Heart right ventricle (tissue), 16 donors: ENCODE measurements at regions of chr6 and their contacts with region 1.

Region 1: GRCh38 chr6:75493400-75494064 is at the start of gene FILIP1:
- DNase-seq: peak in 1 of 2 donors; percentile 86
- ATAC-seq: peak; percentile 87 to 96 (median 90)
- H3K4me3 ChIP-seq: peak within 1 kb of the TSS; percentile 38 to 71 (median 56)
- H3K27ac ChIP-seq: peak within 1 kb of the TSS; percentile 75 to 95 (median 90)
- H3K4me1 ChIP-seq: peaks cover 0 to 63% (median 49%) of the 10 kb centered on the region in 9 donors
- H3K27me3 ChIP-seq: no peaks in the 10 kb centered on the region
- CTCF ChIP-seq: no peak
- total RNA-seq, gene FILIP1: 112 to 269 (median 205) TPM

Region 2: DNA sequence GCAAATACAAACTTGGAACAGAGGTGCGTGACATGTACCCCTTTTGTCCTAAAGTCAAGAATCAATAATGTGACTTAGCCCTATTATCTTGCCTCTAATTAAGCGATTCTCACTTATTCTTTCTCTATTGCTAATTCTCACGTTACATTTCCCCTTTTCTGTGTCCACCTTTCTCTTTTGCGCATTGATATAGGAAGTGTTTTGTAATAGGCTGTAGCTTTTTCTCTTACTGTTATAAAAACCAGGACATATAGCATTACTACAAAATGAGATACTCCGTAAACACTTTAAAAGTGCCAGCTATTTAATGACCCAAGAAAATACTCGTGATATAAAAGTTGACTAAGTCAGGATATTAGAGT is 208.3 kb before region 1 on chr6:
- intact Hi-C with region 1: no loop called
- DNase-seq: no peak
- ATAC-seq: no peak
- H3K4me3 ChIP-seq: peak overlapping the region; percentile 26 to 96 (median 90)
- H3K27ac ChIP-seq: peak overlapping the region in 9 of 10 donors; percentile 74 to 95 (median 92)
- H3K4me1 ChIP-seq: peaks cover 0 to 57% (median 41%) of the 10 kb centered on the region in 9 donors
- H3K27me3 ChIP-seq: no peaks in the 10 kb centered on the region
- CTCF ChIP-seq: no peak

Region 3: GRCh38 chr6:75376347-75377024 is 117.0 kb before region 1 on chr6:
- intact Hi-C with region 1: loop called in 1 of 10 experiments (anchors 5 kb)
- DNase-seq: no peak
- ATAC-seq: peak in 1 of 8 donors; percentile 46
- H3K4me3 ChIP-seq: no peak overlapping the region
- H3K27ac ChIP-seq: no peak overlapping the region
- H3K4me1 ChIP-seq: peaks cover 0 to 36% (median 17%) of the 10 kb centered on the region in 9 donors
- H3K27me3 ChIP-seq: no peaks in the 10 kb centered on the region
- CTCF ChIP-seq: no peak

Region 4: DNA sequence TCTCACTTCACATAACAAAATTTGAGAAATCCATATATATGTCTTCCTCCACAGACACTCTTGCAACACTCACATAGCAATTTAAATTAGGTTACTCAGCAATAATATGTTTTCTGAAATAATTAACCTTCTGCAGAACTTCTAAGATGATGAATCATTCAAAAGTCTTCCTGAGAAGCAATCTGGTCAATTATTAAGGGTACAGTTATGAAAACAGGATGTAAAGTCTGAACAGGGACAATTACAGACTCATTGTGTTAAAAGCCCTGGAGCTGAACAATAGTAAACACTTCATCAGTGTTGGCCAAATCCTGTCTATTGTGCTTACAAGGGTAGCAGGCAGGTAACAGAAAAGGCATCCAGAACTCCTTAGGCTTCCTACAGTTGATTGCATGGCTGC is 75.3 kb before region 1 on chr6:
- intact Hi-C with region 1: loop called in 2 of 10 experiments (anchors 5 kb)
- DNase-seq: no peak
- ATAC-seq: peak in 7 of 8 donors; percentile 51 to 80 (median 70)
- H3K4me3 ChIP-seq: no peak overlapping the region
- H3K27ac ChIP-seq: peak overlapping the region in 6 of 10 donors; percentile 6 to 68 (median 43)
- H3K4me1 ChIP-seq: peaks cover 4 to 96% (median 74%) of the 10 kb centered on the region in 9 donors
- H3K27me3 ChIP-seq: no peaks in the 10 kb centered on the region
- CTCF ChIP-seq: no peak

Region 5: DNA sequence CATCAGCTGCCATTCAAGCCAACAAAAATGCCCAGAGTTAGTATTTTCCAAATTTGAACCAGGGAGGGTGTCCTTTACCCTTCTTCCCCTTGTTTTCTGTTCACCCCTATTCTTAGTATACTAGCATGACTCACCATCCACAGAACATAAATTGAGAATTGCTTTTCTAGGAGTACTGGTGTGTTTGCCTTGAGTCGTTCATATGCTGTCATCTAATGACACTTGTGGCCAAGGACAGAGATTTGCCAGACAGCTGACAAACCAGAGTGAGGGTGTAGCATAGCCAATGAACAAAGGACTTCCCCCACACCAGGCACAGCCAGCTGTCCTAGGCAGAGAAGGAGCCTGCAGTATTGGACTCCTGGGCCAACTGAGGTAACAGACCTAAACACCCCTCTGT is 62.2 kb before region 1 on chr6:
- intact Hi-C with region 1: loop called in 6 of 10 experiments (anchors 2 to 10 kb)
- DNase-seq: peak; percentile 23 to 73
- ATAC-seq: peak; percentile 86 to 98 (median 93)
- H3K4me3 ChIP-seq: peak overlapping the region in 1 of 10 donors; percentile 8
- H3K27ac ChIP-seq: peak overlapping the region; percentile 41 to 83 (median 58)
- H3K4me1 ChIP-seq: peaks cover 12 to 81% (median 60%) of the 10 kb centered on the region in 9 donors
- H3K27me3 ChIP-seq: no peaks in the 10 kb centered on the region
- CTCF ChIP-seq: no peak

Region 6: DNA sequence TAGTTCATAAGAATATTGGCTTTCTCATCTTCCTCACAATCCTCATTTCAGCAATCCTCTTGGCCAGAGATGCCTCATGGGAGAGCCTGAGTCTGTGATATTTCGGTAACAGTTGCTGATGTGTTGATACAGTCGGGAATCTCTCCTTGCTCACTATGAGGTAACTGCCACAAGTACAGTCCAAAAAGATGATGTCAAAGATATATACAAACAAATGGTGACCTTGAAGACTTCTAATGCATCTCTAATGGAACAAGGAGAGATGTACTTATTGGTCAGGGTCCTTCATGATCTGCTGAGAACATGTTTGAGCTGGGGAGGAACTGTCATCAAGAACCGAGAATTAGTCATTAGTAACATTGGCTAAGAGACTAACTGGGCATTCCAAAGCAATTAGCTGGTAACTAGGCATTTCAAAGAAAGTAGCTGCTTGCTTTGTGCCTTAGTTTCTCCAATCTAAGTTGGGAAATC is 56.1 kb before region 1 on chr6:
- intact Hi-C with region 1: loop called in 6 of 10 experiments (anchors 2 to 10 kb)
- DNase-seq: peak in 1 of 2 donors; percentile 22
- ATAC-seq: peak; percentile 60 to 84 (median 76)
- H3K4me3 ChIP-seq: no peak overlapping the region
- H3K27ac ChIP-seq: peak overlapping the region; percentile 52 to 78 (median 68)
- H3K4me1 ChIP-seq: peaks cover 21 to 69% (median 38%) of the 10 kb centered on the region in 9 donors
- H3K27me3 ChIP-seq: no peaks in the 10 kb centered on the region
- CTCF ChIP-seq: no peak